K562 (cell line): ENCODE measurements at regions of chr21 and their contacts with region 1.

Region 1: DNA sequence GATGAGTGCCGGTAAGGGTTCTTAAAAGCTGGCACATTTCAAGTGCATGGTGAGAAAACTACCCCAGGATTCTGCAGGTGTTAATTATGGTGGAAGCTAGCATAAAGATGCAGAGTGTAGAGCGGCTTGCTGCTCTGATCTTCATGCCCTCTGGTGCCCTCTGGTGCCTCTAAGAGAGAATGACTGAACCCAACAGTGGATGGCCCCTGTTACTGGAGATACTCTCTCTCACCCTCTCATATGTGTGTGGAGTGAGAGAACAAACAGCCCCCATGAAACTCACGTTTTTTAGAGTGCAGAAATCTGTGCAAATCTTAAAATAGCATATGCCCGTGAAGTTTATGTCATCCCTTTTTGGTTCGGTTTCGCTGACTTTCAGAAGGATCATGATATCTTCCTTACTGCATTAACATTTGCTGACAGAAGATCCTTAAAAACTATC is 90.0 kb downstream of the GRIK1 start:
- DNase-seq: peak; percentile 62 to 88 (median 69)
- ATAC-seq: peak; percentile 100
- H3K4me3 ChIP-seq: no peak overlapping the region
- H3K27ac ChIP-seq: no peak overlapping the region
- H3K4me1 ChIP-seq: peaks cover 0 to 3% of the 10 kb centered on the region in 2 experiments; a peak in 2 of 5 replicates
- H3K27me3 ChIP-seq: no peaks in the 10 kb centered on the region
- CTCF ChIP-seq: peak; percentile 85 to 91 (median 87)
- EP300 ChIP-seq: no peak; the same call in 1 of the 2 replicates
- POLR2A ChIP-seq: no peak
- RAD21 ChIP-seq: peak; percentile 97

Region 2: DNA sequence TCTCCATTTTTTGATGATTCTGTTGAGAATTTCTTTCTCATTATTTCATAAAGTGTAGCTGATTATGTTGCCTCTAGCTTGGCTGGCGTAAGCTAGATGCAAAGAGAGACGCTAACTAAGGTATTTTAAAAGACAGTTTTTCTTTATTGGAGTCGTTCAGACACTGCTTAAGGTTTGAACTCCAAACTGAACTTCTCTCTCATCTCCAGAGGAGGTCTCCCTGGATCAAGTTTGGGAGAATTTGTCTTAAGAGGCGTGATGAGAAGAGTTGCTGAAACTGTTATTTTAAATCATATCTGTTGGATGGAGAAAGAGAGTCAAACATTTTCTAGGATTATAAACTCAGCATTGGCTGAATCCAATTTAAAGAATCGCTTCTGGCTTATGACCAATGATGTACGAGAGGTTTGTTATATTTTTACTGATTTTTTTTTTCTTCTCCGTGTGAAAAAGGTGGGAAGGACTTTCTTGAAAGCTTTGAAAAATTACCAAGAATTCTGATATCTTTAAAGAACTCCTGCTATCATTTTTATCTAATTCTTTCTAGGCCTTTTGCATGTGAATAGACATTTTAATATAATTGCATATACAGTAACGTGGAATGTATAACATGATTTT is 685.3 kb before region 1 on chr21:
- CTCF ChIA-PET with region 1: no interaction called
- POLR2A ChIA-PET with region 1: no interaction called
- in situ Hi-C with region 1: no loop called
- intact Hi-C with region 1: loop called (anchors 1 kb)
- DNase-seq: peak in 2 of 4 experiments; percentile 50 to 72
- ATAC-seq: peak; percentile 87
- H3K4me3 ChIP-seq: no peak overlapping the region
- H3K27ac ChIP-seq: no peak overlapping the region
- H3K4me1 ChIP-seq: no peaks in the 10 kb centered on the region
- H3K27me3 ChIP-seq: peaks cover 0 to 8% of the 10 kb centered on the region in 2 experiments; a peak in 3 of 5 replicates
- CTCF ChIP-seq: peak; percentile 63 to 86 (median 67)
- EP300 ChIP-seq: 0 out of 2 replicates have a peak, but pooled peaks have one; percentile 12
- POLR2A ChIP-seq: no peak
- RAD21 ChIP-seq: peak; percentile 94 to 96

Region 3: GRCh38 chr21:29372063-29372802 is 477.5 kb before region 1 on chr21:
- CTCF ChIA-PET with region 1: no interaction called
- POLR2A ChIA-PET with region 1: no interaction called
- in situ Hi-C with region 1: no loop called
- intact Hi-C with region 1: loop called (anchors 5 kb)
- DNase-seq: peak; percentile 77 to 91 (median 80)
- ATAC-seq: peak; percentile 95
- H3K4me3 ChIP-seq: no peak overlapping the region
- H3K27ac ChIP-seq: no peak overlapping the region
- H3K4me1 ChIP-seq: peaks cover 0 to 3% of the 10 kb centered on the region in 2 experiments; a peak in 2 of 5 replicates
- H3K27me3 ChIP-seq: no peaks in the 10 kb centered on the region
- CTCF ChIP-seq: peak; percentile 81 to 93 (median 83)
- EP300 ChIP-seq: no peak
- POLR2A ChIP-seq: no peak
- RAD21 ChIP-seq: peak; percentile 96 to 98

Region 4: GRCh38 chr21:29647353-29647781 is 202.4 kb before region 1 on chr21:
- CTCF ChIA-PET with region 1: no interaction called
- POLR2A ChIA-PET with region 1: no interaction called
- in situ Hi-C with region 1: no loop called
- intact Hi-C with region 1: loop called (anchors 5 kb)
- DNase-seq: peak; percentile 58 to 97 (median 74)
- ATAC-seq: peak; percentile 73
- H3K4me3 ChIP-seq: no peak overlapping the region
- H3K27ac ChIP-seq: peak overlapping the region; percentile 95
- H3K4me1 ChIP-seq: peaks cover 21 to 97% of the 10 kb centered on the region in 2 experiments
- H3K27me3 ChIP-seq: no peaks in the 10 kb centered on the region
- CTCF ChIP-seq: no peak
- EP300 ChIP-seq: peak; percentile 96
- POLR2A ChIP-seq: peak; percentile 69
- RAD21 ChIP-seq: peak in 1 of 2 experiments; percentile 27; a peak in 1 of 4 replicates

Region 5: GRCh38 chr21:29989634-29990234 is 140.0 kb after region 1 on chr21:
- CTCF ChIA-PET with region 1: no interaction called
- POLR2A ChIA-PET with region 1: no interaction called
- in situ Hi-C with region 1: no loop called
- intact Hi-C with region 1: no loop called
- DNase-seq: no peak
- ATAC-seq: peak; percentile 56
- H3K4me3 ChIP-seq: no peak overlapping the region
- H3K27ac ChIP-seq: no peak overlapping the region
- H3K4me1 ChIP-seq: no peaks in the 10 kb centered on the region; a peak in 1 of 5 replicates
- H3K27me3 ChIP-seq: no peaks in the 10 kb centered on the region
- CTCF ChIP-seq: no peak
- EP300 ChIP-seq: no peak
- POLR2A ChIP-seq: no peak
- RAD21 ChIP-seq: no peak

Region 6: DNA sequence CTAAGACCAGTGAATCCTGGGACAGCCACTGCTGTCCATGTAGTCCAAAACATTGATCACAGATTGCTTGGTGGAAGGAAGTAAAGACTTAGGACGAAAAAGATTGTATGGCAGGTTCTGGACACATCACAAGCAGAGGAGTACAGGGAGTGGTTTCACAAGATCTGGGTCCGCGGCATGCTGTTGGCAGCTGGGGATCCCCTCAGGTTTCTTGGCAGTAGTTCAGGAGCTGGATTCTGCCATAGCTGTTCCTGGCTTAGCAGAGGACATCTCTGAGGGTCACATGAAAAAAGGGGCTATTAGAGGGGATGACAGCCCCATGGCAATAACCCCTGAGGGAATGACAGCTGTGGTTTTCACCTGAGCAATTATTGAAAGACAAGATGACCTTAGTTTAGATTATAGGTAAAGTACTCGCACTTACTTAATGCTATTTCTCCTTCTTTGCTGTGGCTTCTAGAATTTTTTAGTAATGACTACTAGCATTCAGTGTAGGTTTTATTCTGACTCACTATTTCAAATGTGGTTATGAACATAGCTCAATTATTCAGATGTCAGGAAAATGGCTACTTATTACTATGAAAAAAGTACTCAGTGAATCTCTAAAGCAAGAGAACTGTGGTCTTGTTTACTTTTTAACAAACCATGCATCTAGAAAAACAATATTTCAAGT is 479.6 kb after region 1 on chr21:
- CTCF ChIA-PET with region 1: no interaction called
- POLR2A ChIA-PET with region 1: no interaction called
- in situ Hi-C with region 1: no loop called
- intact Hi-C with region 1: no loop called
- DNase-seq: no peak
- ATAC-seq: no peak
- H3K4me3 ChIP-seq: no peak overlapping the region
- H3K27ac ChIP-seq: no peak overlapping the region
- H3K4me1 ChIP-seq: no peaks in the 10 kb centered on the region
- H3K27me3 ChIP-seq: no peaks in the 10 kb centered on the region
- CTCF ChIP-seq: no peak
- EP300 ChIP-seq: no peak
- POLR2A ChIP-seq: no peak
- RAD21 ChIP-seq: no peak